PC-9 (cell line): ENCODE measurements at regions of chr1 and their contacts with region 1.

Region 1: DNA sequence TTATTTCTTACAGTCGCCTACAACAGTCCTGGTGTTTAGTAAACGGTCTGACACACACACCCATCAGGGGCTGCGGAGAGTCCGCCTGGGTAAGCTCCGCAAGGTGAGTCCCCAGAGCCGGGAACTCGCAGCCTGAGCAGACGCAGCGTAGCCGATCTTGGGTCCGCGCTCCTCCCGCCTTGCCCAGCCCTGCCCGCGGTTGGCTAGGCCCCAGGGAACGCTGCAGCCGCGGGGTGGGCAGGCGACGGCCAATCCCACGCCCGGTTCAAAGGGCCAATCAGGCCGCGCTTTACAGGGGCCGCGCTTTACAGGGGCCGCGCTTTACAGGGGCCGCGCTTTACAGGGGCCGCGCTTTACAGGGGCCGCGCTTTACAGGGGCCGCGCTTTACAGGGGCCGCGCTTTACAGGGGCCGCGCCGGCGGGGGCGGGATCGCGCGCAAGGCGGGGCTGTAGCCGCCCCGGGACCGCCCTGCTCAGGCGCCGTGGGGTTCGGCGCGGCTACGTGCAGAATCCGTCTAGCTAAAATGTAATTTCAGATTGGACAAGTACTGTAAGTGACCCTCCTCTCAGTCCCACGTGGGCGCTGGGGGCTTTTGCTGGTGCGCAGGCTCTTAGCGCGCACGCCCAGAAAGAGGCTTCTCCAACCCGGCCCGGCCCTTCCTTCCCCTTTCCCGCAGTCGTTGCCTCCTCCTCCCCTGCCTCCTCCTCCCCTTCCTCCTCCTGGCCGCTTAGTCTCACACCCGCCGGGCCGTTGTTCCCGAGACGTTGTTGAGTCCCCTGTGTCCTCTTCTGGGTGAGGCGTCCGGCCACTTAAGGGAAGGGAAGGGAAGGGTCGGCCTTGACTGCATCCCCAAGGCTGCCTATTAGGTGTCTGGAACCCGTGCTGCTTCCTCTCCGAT is at the start of gene FGGY:
- DNase-seq: peak; percentile 95 to 97
- H3K4me3 ChIP-seq: peak within 1 kb of the TSS; percentile 78
- H3K27ac ChIP-seq: peak within 1 kb of the TSS; percentile 96
- H3K4me1 ChIP-seq: peaks cover 32% of the 10 kb centered on the region
- H3K27me3 ChIP-seq: no peaks in the 10 kb centered on the region
- CTCF ChIP-seq: no peak
- total RNA-seq, gene FGGY: 17.8 and 22.5 TPM in 2 replicates

Region 2: GRCh38 chr1:58739856-58740466 is 556.6 kb before region 1 on chr1:
- CTCF ChIA-PET with region 1: no interaction called
- POLR2A ChIA-PET with region 1: no interaction called
- intact Hi-C with region 1: loop called (anchors 1 kb)
- DNase-seq: peak in 1 of 2 experiments; percentile 56
- H3K4me3 ChIP-seq: no peak overlapping the region
- H3K27ac ChIP-seq: no peak overlapping the region
- H3K4me1 ChIP-seq: peaks cover 12% of the 10 kb centered on the region
- H3K27me3 ChIP-seq: no peaks in the 10 kb centered on the region
- CTCF ChIP-seq: peak; percentile 95

Region 3: GRCh38 chr1:58903514-58904298 is 392.9 kb before region 1 on chr1:
- CTCF ChIA-PET with region 1: interaction called, 3 read pairs
- POLR2A ChIA-PET with region 1: no interaction called
- intact Hi-C with region 1: loop called (anchors 2 kb)
- DNase-seq: peak; percentile 81 to 94
- H3K4me3 ChIP-seq: peak overlapping the region; percentile 63
- H3K27ac ChIP-seq: peak overlapping the region; percentile 90
- H3K4me1 ChIP-seq: peaks cover 69% of the 10 kb centered on the region
- H3K27me3 ChIP-seq: no peaks in the 10 kb centered on the region
- CTCF ChIP-seq: no peak

Region 4: GRCh38 chr1:59025898-59026426 is 270.6 kb before region 1 on chr1:
- CTCF ChIA-PET with region 1: no interaction called
- POLR2A ChIA-PET with region 1: no interaction called
- intact Hi-C with region 1: loop called (anchors 5 kb)
- DNase-seq: no peak
- H3K4me3 ChIP-seq: no peak overlapping the region
- H3K27ac ChIP-seq: no peak overlapping the region
- H3K4me1 ChIP-seq: peaks cover 46% of the 10 kb centered on the region
- H3K27me3 ChIP-seq: no peaks in the 10 kb centered on the region
- CTCF ChIP-seq: no peak

Region 5: GRCh38 chr1:59316497-59317128 is 20.0 kb after region 1 on chr1:
- CTCF ChIA-PET with region 1: no interaction called
- POLR2A ChIA-PET with region 1: no interaction called
- intact Hi-C with region 1: no loop called
- DNase-seq: no peak
- H3K4me3 ChIP-seq: no peak overlapping the region
- H3K27ac ChIP-seq: no peak overlapping the region
- H3K4me1 ChIP-seq: no peaks in the 10 kb centered on the region
- H3K27me3 ChIP-seq: no peaks in the 10 kb centered on the region
- CTCF ChIP-seq: no peak

Region 6: DNA sequence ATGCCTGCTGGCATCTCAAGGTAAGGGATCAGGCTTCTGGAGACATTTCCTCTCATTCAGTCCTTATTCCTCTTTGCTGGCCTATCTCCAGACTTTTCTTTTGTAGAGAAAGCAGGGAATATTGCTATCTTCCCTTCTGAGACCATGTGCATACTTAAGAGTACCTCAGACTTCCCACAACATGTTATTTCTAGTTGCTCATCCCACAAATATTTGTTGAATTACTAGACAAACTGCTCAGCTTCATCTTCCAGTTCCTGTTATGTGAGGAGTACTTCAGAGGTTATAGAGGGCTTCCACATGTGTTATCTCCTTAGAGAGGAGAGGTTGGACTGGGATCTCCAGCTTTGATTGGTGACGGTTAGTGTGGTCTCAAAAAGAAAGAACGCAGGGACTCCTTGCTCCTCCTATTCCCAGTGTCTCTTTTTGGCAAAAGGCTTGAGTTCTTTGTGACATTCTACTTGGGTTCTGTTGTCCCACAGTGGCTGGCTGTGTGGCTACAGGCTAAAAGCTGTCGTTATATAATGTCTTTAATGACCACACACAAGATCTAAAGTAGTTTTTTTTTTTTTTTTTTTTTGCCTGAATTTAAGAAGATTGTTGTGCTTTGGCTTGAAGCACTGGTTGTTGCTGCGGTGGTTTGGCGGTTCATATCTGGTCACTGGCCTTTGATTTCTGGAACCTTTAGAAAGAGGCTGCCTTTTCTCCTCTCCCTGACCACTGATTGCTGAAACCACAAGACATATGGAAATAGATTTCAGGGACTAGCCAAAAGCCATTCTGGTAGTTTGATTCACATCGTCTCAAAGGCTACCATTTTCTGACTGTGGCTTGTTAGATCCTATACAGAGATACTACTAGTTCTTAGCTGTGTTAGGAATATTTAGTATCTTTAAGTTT is 79.0 kb after region 1 on chr1:
- CTCF ChIA-PET with region 1: no interaction called
- POLR2A ChIA-PET with region 1: interaction called, 10 read pairs
- intact Hi-C with region 1: no loop called
- DNase-seq: peak; percentile 25 to 54
- H3K4me3 ChIP-seq: no peak overlapping the region
- H3K27ac ChIP-seq: no peak overlapping the region
- H3K4me1 ChIP-seq: no peaks in the 10 kb centered on the region
- H3K27me3 ChIP-seq: no peaks in the 10 kb centered on the region
- CTCF ChIP-seq: no peak

Region 7: GRCh38 chr1:59699227-59699847 is 402.7 kb after region 1 on chr1:
- CTCF ChIA-PET with region 1: no interaction called
- POLR2A ChIA-PET with region 1: no interaction called
- intact Hi-C with region 1: loop called (anchors 1 kb)
- DNase-seq: peak in 1 of 2 experiments; percentile 8
- H3K4me3 ChIP-seq: no peak overlapping the region
- H3K27ac ChIP-seq: no peak overlapping the region
- H3K4me1 ChIP-seq: no peaks in the 10 kb centered on the region; the same call in 1 of the 2 replicates
- H3K27me3 ChIP-seq: no peaks in the 10 kb centered on the region
- CTCF ChIP-seq: peak; percentile 96